ENCODE measurements at regions of chr18 and their contacts with region 1.

Region 1: GRCh38 chr18:3665780-3666525 is 216.0 kb downstream of the TGIF1 start:
- DNase-seq: peak; percentile 71
- CTCF ChIP-seq: peak; percentile 86

Region 2: DNA sequence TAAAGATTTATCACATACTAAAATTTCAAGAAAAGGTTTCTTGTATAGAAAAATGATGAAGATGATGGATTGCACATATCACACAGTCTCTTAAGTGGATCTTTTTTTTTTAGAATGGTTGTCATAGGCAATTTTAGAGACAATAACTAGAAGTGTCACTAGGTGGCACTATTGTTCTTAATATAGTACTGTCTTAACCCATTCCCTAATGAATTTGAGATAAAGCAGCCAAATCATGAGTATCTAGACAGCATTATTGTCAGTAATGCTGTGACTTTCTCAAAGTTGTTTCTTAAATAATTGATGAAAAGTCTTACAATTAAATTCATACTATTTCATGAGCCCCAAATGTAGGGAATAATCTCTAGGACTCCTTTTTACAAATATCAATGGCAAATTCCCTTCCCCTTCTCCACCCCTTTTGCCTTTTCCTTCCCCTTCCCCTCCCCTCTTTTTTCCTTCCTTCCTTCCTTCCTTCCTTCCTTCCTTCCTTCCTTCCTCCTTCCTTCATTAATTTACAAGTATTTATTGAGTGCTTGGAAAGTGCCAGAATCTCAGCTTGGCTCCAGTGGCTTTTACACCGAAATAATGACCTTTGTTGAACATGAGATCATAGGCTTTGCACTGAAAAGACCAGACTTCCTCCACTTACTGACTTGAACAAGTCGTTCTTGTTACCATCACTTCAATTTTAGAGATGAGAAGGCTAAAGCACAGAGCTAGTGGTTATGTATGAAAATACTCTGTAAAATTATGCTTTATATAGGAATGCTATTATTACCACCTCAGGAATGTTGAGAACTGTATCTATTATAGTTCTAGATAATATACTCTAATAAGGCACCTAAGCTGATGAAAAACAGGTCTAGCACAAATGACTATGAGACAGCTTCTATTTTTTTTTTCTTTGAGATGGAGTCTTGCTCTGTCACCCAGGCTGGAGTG is 384.2 kb before region 1 on chr18:
- CTCF ChIA-PET with region 1: interaction called, 138 read pairs
- POLR2A ChIA-PET with region 1: no interaction called
- DNase-seq: peak; percentile 59
- CTCF ChIP-seq: peak; percentile 61

Region 3: GRCh38 chr18:3321133-3321812 is 344.7 kb before region 1 on chr18:
- CTCF ChIA-PET with region 1: interaction called, 10 read pairs
- POLR2A ChIA-PET with region 1: no interaction called
- DNase-seq: no peak
- CTCF ChIP-seq: no peak

Region 4: DNA sequence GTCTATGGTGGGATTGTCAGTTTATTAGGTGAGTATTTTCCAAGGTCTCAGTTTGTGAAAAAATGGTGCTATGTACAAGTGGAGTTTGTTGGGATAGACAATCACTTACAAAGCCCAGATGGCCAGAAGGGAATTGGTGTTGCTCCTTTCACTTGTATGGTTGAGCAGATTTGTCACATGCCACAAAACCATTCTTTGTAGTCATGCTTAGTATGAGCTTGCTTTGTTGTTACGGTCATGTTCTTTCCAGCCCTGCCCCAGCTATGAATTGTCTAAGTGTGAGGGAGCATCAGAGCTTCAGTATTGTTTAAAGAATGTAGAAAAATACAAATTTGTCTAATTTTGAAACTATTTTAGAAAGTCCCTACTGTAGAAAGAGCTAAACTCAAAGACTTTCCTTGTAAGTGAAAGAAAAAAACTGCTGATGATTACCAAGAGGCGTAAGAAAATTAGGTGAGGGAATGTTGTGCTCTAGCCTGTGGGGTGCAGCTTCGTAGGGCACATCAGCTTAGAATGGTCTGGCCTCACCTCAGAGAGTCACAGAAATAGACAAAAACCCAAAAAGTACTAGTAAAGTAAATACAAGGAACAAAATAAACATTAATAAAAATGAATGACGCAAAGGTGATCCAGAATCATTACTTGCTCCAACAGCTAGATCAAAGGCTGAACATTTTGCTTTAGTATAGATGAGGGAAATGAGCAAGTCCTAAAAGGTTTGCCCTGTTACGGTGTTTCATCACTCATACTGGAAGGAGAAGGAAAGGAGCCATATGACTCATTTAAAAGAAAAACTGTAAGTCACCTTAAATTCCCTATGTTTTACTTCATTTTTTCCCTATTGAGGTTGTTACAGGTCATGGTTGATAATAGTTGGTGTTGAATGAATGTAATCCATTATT is 206.8 kb before region 1 on chr18:
- CTCF ChIA-PET with region 1: interaction called, 17 read pairs
- POLR2A ChIA-PET with region 1: no interaction called
- DNase-seq: no peak
- CTCF ChIP-seq: no peak

Region 5: GRCh38 chr18:3593904-3594661 is 71.9 kb before region 1 on chr18:
- CTCF ChIA-PET with region 1: interaction called, 19 read pairs
- POLR2A ChIA-PET with region 1: no interaction called
- DNase-seq: peak; percentile 75
- CTCF ChIP-seq: peak; percentile 95

Region 6: DNA sequence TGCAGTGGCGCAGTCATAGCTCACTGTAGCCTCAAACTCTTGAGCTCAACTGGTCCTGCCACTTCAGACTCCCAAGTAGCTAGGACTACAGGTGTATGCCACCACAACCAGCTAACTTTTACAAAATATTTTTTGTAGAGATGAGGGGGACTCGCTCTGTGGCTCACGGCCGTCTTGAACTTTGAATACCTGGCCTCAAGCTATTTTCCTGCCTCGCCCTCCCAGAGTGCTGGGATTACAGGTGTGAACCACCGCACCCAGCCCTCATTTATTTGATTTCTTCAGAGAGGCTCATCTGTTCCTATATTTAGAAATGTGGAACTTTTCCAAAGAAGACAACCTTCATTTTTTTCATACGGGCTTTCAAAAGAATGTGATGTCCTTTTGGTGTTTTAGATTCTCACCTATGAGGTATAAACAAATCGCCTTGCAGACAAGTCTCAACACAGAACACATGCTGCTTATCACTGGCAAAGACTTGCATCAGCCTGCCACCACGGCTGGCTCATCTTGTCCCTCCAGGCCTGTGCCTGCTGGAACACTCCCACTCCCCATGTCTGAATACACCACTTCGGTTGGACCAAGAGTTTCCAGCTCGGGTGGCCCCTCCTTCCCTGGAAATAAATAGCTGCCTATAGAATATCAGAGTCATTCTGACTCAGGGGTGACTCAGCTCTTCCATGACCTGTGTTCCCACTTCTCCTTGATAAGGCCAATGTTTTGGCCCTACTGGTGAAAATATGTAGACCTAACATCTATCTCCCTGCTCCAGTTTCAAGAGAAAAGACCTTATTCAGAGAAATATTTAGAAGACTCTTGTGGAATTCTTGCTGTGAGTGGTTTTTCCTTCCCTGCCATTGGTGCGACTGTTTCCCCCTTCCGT is 13.3 kb before region 1 on chr18:
- CTCF ChIA-PET with region 1: interaction called, 14 read pairs
- POLR2A ChIA-PET with region 1: no interaction called
- DNase-seq: no peak
- CTCF ChIP-seq: no peak

Measured in GM10248 (cell line).